CD8-positive, alpha-beta T cell (primary cell): ENCODE measurements at regions of chr7 and their contacts with region 1.

Region 1: GRCh38 chr7:128343554-128344430 is at the start of gene RBM28:
- DNase-seq: peak; percentile 74 to 93 (median 83)
- ATAC-seq: peak; percentile 94
- H3K4me3 ChIP-seq: peak within 1 kb of the TSS; percentile 78 to 87
- H3K4me3 Mint-ChIP-seq: peak within 1 kb of the TSS; percentile 95
- H3K27ac ChIP-seq: peak within 1 kb of the TSS; percentile 60 to 67
- H3K27ac Mint-ChIP-seq: peak within 1 kb of the TSS; percentile 94
- H3K4me1 ChIP-seq: peaks cover 26% of the 10 kb centered on the region
- H3K4me1 Mint-ChIP-seq: peaks cover 35% of the 10 kb centered on the region
- H3K27me3 ChIP-seq: no peaks in the 10 kb centered on the region
- H3K27me3 Mint-ChIP-seq: peaks cover 3% of the 10 kb centered on the region
- CTCF ChIP-seq: no peak
- total RNA-seq, gene RBM28: 13.1 to 14.7 TPM

Region 2: GRCh38 chr7:127651556-127652332 is 692.0 kb before region 1 on chr7 and contains the start of gene SND1:
- CTCF ChIA-PET with region 1: no interaction called
- POLR2A ChIA-PET with region 1: no interaction called
- intact Hi-C with region 1: loop called in 1 of 2 experiments (anchors 5 kb)
- DNase-seq: peak; percentile 96 to 100 (median 98)
- ATAC-seq: peak; percentile 94
- H3K4me3 ChIP-seq: peak within 1 kb of the TSS; percentile 82 to 98
- H3K4me3 Mint-ChIP-seq: peak within 1 kb of the TSS; percentile 98
- H3K27ac ChIP-seq: peak within 1 kb of the TSS; percentile 92 to 98
- H3K27ac Mint-ChIP-seq: peak within 1 kb of the TSS; percentile 99
- H3K4me1 ChIP-seq: peaks cover 35% of the 10 kb centered on the region
- H3K4me1 Mint-ChIP-seq: peaks cover 50% of the 10 kb centered on the region
- H3K27me3 ChIP-seq: no peaks in the 10 kb centered on the region
- H3K27me3 Mint-ChIP-seq: no peaks in the 10 kb centered on the region
- CTCF ChIP-seq: no peak
- total RNA-seq, gene SND1: 87.7 to 101 TPM

Region 3: DNA sequence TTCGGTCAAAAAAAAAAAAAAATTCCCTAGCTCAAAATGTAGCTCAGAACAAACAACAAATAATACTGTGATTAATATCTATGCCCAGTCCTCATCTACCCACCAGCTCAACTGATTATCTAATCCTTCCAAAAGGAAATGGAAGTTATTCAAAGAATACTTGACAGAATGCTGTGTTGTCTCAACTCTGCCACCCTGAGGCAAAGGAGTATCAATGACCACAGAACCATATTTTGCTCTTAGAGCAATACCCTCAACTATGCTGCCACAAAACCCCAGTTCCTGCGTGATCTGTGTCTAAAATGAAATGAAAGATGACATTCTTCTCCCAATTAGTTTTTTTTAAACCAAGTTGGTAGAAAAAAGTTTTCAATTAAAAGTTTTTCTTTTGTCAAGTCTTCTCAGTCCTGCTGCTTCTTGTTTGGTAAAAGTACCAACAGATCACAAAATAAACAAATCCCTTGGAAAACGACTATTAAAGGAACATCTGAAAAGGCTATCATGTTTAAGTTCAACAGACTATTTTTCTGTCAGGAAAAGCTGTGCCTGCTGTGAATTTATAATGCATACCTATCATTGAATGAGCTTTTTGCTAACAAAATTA is 21.6 kb before region 1 on chr7:
- CTCF ChIA-PET with region 1: interaction called, 12 read pairs
- POLR2A ChIA-PET with region 1: interaction called, 3 read pairs
- intact Hi-C with region 1: no loop called
- DNase-seq: peak in 5 of 9 experiments; percentile 18 to 77 (median 32)
- ATAC-seq: peak; percentile 79
- H3K4me3 ChIP-seq: no peak overlapping the region
- H3K4me3 Mint-ChIP-seq: peak overlapping the region; percentile 36
- H3K27ac ChIP-seq: peak overlapping the region in 1 of 2 experiments; percentile 80
- H3K27ac Mint-ChIP-seq: peak overlapping the region; percentile 91
- H3K4me1 ChIP-seq: peaks cover 39% of the 10 kb centered on the region
- H3K4me1 Mint-ChIP-seq: peaks cover 43% of the 10 kb centered on the region
- H3K27me3 ChIP-seq: no peaks in the 10 kb centered on the region
- H3K27me3 Mint-ChIP-seq: no peaks in the 10 kb centered on the region
- CTCF ChIP-seq: peak; percentile 36

Region 4: GRCh38 chr7:128387216-128388144 is 43.7 kb after region 1 on chr7:
- CTCF ChIA-PET with region 1: interaction called, 74 read pairs
- POLR2A ChIA-PET with region 1: no interaction called
- intact Hi-C with region 1: loop called in 1 of 2 experiments (anchors 1 kb)
- DNase-seq: peak; percentile 49 to 77 (median 71)
- ATAC-seq: peak; percentile 98
- H3K4me3 ChIP-seq: no peak overlapping the region
- H3K4me3 Mint-ChIP-seq: no peak overlapping the region
- H3K27ac ChIP-seq: no peak overlapping the region
- H3K27ac Mint-ChIP-seq: no peak overlapping the region
- H3K4me1 ChIP-seq: no peaks in the 10 kb centered on the region
- H3K4me1 Mint-ChIP-seq: no peaks in the 10 kb centered on the region
- H3K27me3 ChIP-seq: no peaks in the 10 kb centered on the region
- H3K27me3 Mint-ChIP-seq: no peaks in the 10 kb centered on the region
- CTCF ChIP-seq: peak; percentile 73

Region 5: GRCh38 chr7:128435327-128435686 is 91.5 kb after region 1 on chr7:
- CTCF ChIA-PET with region 1: no interaction called
- POLR2A ChIA-PET with region 1: no interaction called
- intact Hi-C with region 1: no loop called
- DNase-seq: no peak
- ATAC-seq: no peak
- H3K4me3 ChIP-seq: no peak overlapping the region
- H3K4me3 Mint-ChIP-seq: no peak overlapping the region
- H3K27ac ChIP-seq: no peak overlapping the region
- H3K27ac Mint-ChIP-seq: no peak overlapping the region
- H3K4me1 ChIP-seq: no peaks in the 10 kb centered on the region
- H3K4me1 Mint-ChIP-seq: no peaks in the 10 kb centered on the region
- H3K27me3 ChIP-seq: peaks cover 0 to 5% of the 10 kb centered on the region in 2 experiments
- H3K27me3 Mint-ChIP-seq: peaks cover 9% of the 10 kb centered on the region
- CTCF ChIP-seq: no peak

Region 6: GRCh38 chr7:128455551-128456254 is 111.9 kb after region 1 on chr7 and contains the start of gene HILPDA:
- CTCF ChIA-PET with region 1: interaction called, 4 read pairs
- POLR2A ChIA-PET with region 1: interaction called, 4 read pairs
- intact Hi-C with region 1: loop called (anchors 1 kb)
- DNase-seq: peak; percentile 84 to 98 (median 93)
- ATAC-seq: peak; percentile 92
- H3K4me3 ChIP-seq: peak within 1 kb of the TSS; percentile 83 to 91
- H3K4me3 Mint-ChIP-seq: peak within 1 kb of the TSS; percentile 95
- H3K27ac ChIP-seq: peak within 1 kb of the TSS; percentile 60 to 73
- H3K27ac Mint-ChIP-seq: peak within 1 kb of the TSS; percentile 98
- H3K4me1 ChIP-seq: peaks cover 19% of the 10 kb centered on the region
- H3K4me1 Mint-ChIP-seq: peaks cover 26% of the 10 kb centered on the region
- H3K27me3 ChIP-seq: no peaks in the 10 kb centered on the region
- H3K27me3 Mint-ChIP-seq: no peaks in the 10 kb centered on the region
- CTCF ChIP-seq: no peak
- total RNA-seq, gene HILPDA: 1.3 to 2.0 TPM

Region 7: DNA sequence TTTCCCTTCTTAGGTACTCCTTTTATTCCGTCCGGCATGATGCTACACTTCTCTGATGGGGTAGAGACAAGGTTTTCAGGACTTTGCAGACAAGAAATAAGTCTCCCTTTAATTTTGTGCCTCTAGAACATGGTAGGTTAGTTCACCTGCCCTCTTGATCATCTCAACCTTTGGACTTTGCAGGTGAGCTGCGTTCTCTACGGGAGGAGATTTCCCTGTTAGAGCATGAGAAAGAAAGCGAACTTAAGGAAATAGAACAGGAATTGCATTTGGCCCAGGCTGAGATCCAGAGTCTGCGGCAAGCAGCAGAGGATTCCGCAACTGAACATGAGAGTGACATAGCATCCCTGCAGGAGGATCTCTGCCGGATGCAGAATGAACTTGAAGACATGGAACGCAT is 457.2 kb after region 1 on chr7:
- CTCF ChIA-PET with region 1: no interaction called
- POLR2A ChIA-PET with region 1: no interaction called
- intact Hi-C with region 1: no loop called
- DNase-seq: no peak
- ATAC-seq: no peak
- H3K4me3 ChIP-seq: no peak overlapping the region
- H3K4me3 Mint-ChIP-seq: no peak overlapping the region
- H3K27ac ChIP-seq: no peak overlapping the region
- H3K27ac Mint-ChIP-seq: no peak overlapping the region
- H3K4me1 ChIP-seq: no peaks in the 10 kb centered on the region
- H3K4me1 Mint-ChIP-seq: no peaks in the 10 kb centered on the region
- H3K27me3 ChIP-seq: no peaks in the 10 kb centered on the region
- H3K27me3 Mint-ChIP-seq: no peaks in the 10 kb centered on the region
- CTCF ChIP-seq: no peak

Region 8: GRCh38 chr7:128862571-128863432 is 519.0 kb after region 1 on chr7 and contains the start of gene ATP6V1F:
- CTCF ChIA-PET with region 1: no interaction called
- POLR2A ChIA-PET with region 1: no interaction called
- intact Hi-C with region 1: loop called in 1 of 2 experiments (anchors 10 kb)
- DNase-seq: peak; percentile 97 to 100 (median 99)
- ATAC-seq: peak; percentile 87
- H3K4me3 ChIP-seq: peak within 1 kb of the TSS; percentile 80 to 92
- H3K4me3 Mint-ChIP-seq: peak within 1 kb of the TSS; percentile 96
- H3K27ac ChIP-seq: peak within 1 kb of the TSS; percentile 71 to 74
- H3K27ac Mint-ChIP-seq: peak within 1 kb of the TSS; percentile 94
- H3K4me1 ChIP-seq: peaks cover 17% of the 10 kb centered on the region
- H3K4me1 Mint-ChIP-seq: peaks cover 34% of the 10 kb centered on the region
- H3K27me3 ChIP-seq: no peaks in the 10 kb centered on the region
- H3K27me3 Mint-ChIP-seq: no peaks in the 10 kb centered on the region
- CTCF ChIP-seq: no peak
- total RNA-seq, gene ATP6V1F: 54.8 to 59.3 TPM

Region 9: DNA sequence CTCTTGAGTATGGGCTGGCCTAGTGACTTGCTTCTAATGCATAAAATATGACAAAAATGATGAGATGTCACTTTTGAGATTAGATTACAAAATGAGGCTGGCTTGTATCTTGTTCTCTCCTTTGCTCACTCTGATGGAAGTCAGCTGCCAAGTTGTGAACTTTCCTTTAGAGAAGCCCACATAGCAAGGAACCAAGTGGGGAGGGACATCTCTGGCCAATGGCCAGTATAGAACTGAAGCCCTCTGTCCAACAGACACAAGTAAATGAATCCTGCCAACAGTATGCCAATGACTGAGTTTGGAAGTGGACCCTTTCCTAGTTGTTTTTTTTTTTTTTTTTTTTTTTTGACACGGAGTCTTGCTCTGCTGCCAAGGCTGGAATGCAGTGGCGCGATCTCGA is 1704.0 kb after region 1 on chr7:
- CTCF ChIA-PET with region 1: no interaction called
- POLR2A ChIA-PET with region 1: no interaction called
- intact Hi-C with region 1: loop called in 1 of 2 experiments (anchors 10 kb)
- DNase-seq: no peak
- ATAC-seq: no peak
- H3K4me3 ChIP-seq: no peak overlapping the region
- H3K4me3 Mint-ChIP-seq: no peak overlapping the region
- H3K27ac ChIP-seq: no peak overlapping the region
- H3K27ac Mint-ChIP-seq: no peak overlapping the region
- H3K4me1 ChIP-seq: peaks cover 3% of the 10 kb centered on the region
- H3K4me1 Mint-ChIP-seq: peaks cover 14% of the 10 kb centered on the region
- H3K27me3 ChIP-seq: no peaks in the 10 kb centered on the region
- H3K27me3 Mint-ChIP-seq: no peaks in the 10 kb centered on the region
- CTCF ChIP-seq: no peak